GM10248 (cell line): ENCODE measurements at regions of chr15 and their contacts with region 1.

Region 1: DNA sequence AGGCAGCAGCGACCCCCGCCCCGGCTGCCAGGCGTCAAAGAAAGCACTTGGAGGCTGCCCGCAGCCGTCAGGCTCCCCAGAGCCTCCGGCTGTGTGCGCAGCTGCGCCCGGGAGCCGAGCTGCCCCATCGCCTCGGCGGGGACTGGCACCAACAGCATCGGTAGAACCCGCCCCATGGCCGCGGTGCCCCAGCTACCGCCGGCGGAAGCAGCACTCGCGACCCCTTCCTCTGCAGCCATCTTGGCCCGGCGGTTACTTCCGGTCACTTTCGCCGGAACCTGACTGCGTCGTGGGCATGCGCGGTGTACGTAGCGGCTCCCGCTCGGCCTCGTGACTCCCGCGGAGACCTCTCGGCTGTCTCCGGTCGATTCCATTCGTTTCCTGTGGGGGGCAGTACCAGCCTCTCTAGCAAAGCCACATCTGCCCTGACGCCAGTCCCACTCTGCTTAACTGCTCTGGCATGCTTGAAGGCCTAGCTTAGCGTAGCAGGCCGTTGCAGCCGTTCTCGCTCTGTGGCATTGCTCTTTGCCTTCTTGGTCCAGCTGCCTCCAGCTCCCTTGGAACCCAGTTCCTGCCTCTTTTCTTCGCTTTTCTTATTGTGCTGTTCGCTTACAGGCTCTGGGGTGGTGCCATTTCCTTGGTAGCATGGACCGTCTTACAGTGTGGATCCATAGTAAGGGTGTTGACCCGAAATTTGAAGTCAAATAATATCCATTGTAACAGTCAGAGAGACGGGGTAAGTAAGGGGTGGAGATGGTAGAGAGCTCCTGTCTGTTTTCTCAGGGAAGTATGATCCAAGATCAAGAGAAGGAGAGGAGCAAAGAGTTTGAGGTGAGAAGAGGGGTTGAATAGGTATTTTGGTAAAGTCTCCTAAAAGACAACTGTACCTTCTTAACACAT is at the start of gene SPG11:
- DNase-seq: peak; percentile 92
- CTCF ChIP-seq: peak; percentile 88

Region 2: DNA sequence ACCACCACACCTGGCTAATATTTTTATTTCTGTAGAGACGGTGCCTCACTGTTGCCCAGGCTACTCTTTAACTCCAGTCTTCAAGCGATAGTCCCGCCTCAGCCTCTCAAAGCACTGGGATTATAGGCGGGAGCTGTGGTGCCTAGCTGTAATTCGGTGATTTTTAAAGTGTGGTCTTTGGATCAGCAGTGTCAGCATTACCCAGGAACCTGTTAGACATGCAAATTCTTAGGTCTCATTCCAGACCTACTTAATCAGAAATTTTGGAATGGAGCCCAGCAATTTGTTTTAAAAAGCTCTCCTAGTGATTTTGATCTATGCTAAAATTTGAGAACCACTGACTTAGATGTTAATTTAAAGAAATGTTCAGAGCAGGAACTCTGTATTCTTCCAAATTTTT is 323.2 kb before region 1 on chr15:
- CTCF ChIA-PET with region 1: no interaction called
- POLR2A ChIA-PET with region 1: no interaction called
- DNase-seq: no peak
- CTCF ChIP-seq: no peak

Region 3: DNA sequence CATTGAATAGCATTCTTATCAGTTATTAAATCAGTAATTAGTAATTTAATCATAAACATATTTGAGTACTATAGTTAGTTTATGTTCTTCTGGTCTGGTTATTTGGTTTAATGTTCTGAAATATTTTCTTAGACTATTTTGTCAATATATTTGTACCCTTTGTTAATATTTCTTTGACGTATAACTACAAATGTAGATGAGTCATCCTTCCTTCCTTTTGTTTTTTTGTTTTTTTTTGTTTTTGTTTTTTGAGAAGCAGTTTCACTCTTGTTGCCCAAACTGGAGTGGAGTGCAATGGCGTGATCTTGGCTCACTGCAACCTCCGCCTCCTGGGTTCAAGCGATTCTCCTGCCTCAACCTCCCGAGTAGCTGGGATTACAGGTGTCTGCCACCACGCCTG is 144.1 kb before region 1 on chr15:
- CTCF ChIA-PET with region 1: no interaction called
- POLR2A ChIA-PET with region 1: no interaction called
- DNase-seq: no peak
- CTCF ChIP-seq: no peak

Region 4: GRCh38 chr15:44676676-44677075 is 13.0 kb after region 1 on chr15:
- CTCF ChIA-PET with region 1: interaction called, 38 read pairs
- POLR2A ChIA-PET with region 1: no interaction called
- DNase-seq: no peak
- CTCF ChIP-seq: no peak

Region 5: GRCh38 chr15:44682211-44682610 is 18.6 kb after region 1 on chr15:
- CTCF ChIA-PET with region 1: interaction called, 28 read pairs
- POLR2A ChIA-PET with region 1: interaction called, 3 read pairs
- DNase-seq: peak; percentile 5
- CTCF ChIP-seq: no peak

Region 6: DNA sequence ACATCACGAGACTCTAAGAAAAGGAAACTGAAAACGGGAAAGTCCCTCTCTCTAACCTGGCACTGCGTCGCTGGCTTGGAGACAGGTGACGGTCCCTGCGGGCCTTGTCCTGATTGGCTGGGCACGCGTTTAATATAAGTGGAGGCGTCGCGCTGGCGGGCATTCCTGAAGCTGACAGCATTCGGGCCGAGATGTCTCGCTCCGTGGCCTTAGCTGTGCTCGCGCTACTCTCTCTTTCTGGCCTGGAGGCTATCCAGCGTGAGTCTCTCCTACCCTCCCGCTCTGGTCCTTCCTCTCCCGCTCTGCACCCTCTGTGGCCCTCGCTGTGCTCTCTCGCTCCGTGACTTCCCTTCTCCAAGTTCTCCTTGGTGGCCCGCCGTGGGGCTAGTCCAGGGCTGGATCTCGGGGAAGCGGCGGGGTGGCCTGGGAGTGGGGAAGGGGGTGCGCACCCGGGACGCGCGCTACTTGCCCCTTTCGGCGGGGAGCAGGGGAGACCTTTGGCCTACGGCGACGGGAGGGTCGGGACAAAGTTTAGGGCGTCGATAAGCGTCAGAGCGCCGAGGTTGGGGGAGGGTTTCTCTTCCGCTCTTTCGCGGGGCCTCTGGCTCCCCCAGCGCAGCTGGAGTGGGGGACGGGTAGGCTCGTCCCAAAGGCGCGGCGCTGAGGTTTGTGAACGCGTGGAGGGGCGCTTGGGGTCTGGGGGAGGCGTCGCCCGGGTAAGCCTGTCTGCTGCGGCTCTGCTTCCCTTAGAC is 47.9 kb after region 1 on chr15 and contains the start of gene B2M:
- CTCF ChIA-PET with region 1: interaction called, 120 read pairs
- POLR2A ChIA-PET with region 1: interaction called, 69 read pairs
- DNase-seq: peak; percentile 94
- CTCF ChIP-seq: no peak

Region 7: GRCh38 chr15:44728576-44729407 is 65.1 kb after region 1 on chr15:
- CTCF ChIA-PET with region 1: interaction called, 101 read pairs
- POLR2A ChIA-PET with region 1: interaction called, 11 read pairs
- DNase-seq: peak; percentile 89
- CTCF ChIP-seq: no peak

Region 8: GRCh38 chr15:44763187-44763586 is 99.5 kb after region 1 on chr15:
- CTCF ChIA-PET with region 1: interaction called, 13 read pairs
- POLR2A ChIA-PET with region 1: no interaction called
- DNase-seq: no peak
- CTCF ChIP-seq: no peak